Posterior cingulate gyrus (tissue), 11 donors: ENCODE measurements at regions of chr3 and their contacts with region 1.

Region 1: GRCh38 chr3:38164966-38165680 is at the start of gene OXSR1:
- DNase-seq: peak; percentile 92 to 100 (median 98)

Region 2: GRCh38 chr3:38004415-38005076 is 160.6 kb before region 1 on chr3:
- intact Hi-C with region 1: loop called (anchors 10 kb)
- DNase-seq: peak; percentile 64 to 96 (median 84)

Region 3: GRCh38 chr3:38136777-38137614 is 28.1 kb before region 1 on chr3 and contains the start of gene ACAA1:
- intact Hi-C with region 1: loop called (anchors 2 kb)
- DNase-seq: peak; percentile 98 to 100 (median 100)

Region 4: GRCh38 chr3:38327335-38328009 is 162.3 kb after region 1 on chr3:
- intact Hi-C with region 1: no loop called
- DNase-seq: no peak

Region 5: GRCh38 chr3:38453075-38453912 is 288.2 kb after region 1 on chr3 and contains the start of gene ACVR2B:
- intact Hi-C with region 1: loop called (anchors 10 kb)
- DNase-seq: peak; percentile 73 to 98 (median 85)